ENCODE measurements at regions of chr5 and their contacts with region 1.

Region 1: GRCh38 chr5:134904630-134905245 is at the start of gene PCBD2:
- DNase-seq: peak; percentile 90 to 95
- ATAC-seq: peak; percentile 86 to 97 (median 86)
- H3K4me3 ChIP-seq: peak within 1 kb of the TSS; percentile 71
- H3K4me3 Mint-ChIP-seq: peak within 1 kb of the TSS; percentile 96
- H3K27ac ChIP-seq: peak within 1 kb of the TSS; percentile 92
- H3K27ac Mint-ChIP-seq: peak within 1 kb of the TSS; percentile 91 to 94
- H3K4me1 ChIP-seq: peaks cover 11% of the 10 kb centered on the region
- H3K4me1 Mint-ChIP-seq: peaks cover 4% of the 10 kb centered on the region in 2 donors
- H3K27me3 ChIP-seq: no peaks in the 10 kb centered on the region
- H3K27me3 Mint-ChIP-seq: no peaks in the 10 kb centered on the region
- CTCF ChIP-seq: peak; percentile 91
- total RNA-seq, gene PCBD2: 7.6 to 11.5 (median 7.7) TPM

Region 2: DNA sequence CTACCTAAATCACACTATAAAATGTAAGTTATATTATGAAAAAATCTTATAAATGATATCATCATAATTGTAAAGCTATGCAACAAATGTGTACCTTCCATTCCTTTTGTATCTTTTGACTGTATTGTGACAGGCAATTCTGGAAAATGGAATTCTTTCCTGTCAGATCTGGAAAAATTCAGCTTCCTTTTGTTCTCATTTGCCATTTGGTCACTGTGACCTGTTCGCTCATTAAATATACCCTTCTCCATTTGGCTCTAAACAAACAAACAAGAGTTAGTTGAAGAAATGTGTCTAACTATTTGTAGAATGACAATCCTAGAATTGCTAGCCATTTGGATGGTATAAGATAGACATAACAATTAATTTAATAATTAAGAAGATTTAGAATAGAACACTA is 600.4 kb before region 1 on chr5:
- intact Hi-C with region 1: loop called (anchors 10 kb)
- DNase-seq: no peak
- ATAC-seq: no peak
- H3K4me3 ChIP-seq: no peak overlapping the region
- H3K4me3 Mint-ChIP-seq: no peak overlapping the region
- H3K27ac ChIP-seq: no peak overlapping the region
- H3K27ac Mint-ChIP-seq: no peak overlapping the region
- H3K4me1 ChIP-seq: no peaks in the 10 kb centered on the region
- H3K4me1 Mint-ChIP-seq: no peaks in the 10 kb centered on the region
- H3K27me3 ChIP-seq: no peaks in the 10 kb centered on the region
- H3K27me3 Mint-ChIP-seq: peaks cover 0 to 2% of the 10 kb centered on the region in 2 donors
- CTCF ChIP-seq: no peak

Region 3: GRCh38 chr5:134637161-134637582 is 267.6 kb before region 1 on chr5:
- intact Hi-C with region 1: loop called (anchors 10 kb)
- DNase-seq: no peak
- ATAC-seq: no peak
- H3K4me3 ChIP-seq: no peak overlapping the region
- H3K4me3 Mint-ChIP-seq: no peak overlapping the region
- H3K27ac ChIP-seq: no peak overlapping the region
- H3K27ac Mint-ChIP-seq: no peak overlapping the region
- H3K4me1 ChIP-seq: peaks cover 10% of the 10 kb centered on the region
- H3K4me1 Mint-ChIP-seq: no peaks in the 10 kb centered on the region
- H3K27me3 ChIP-seq: no peaks in the 10 kb centered on the region
- H3K27me3 Mint-ChIP-seq: no peaks in the 10 kb centered on the region
- CTCF ChIP-seq: no peak

Region 4: DNA sequence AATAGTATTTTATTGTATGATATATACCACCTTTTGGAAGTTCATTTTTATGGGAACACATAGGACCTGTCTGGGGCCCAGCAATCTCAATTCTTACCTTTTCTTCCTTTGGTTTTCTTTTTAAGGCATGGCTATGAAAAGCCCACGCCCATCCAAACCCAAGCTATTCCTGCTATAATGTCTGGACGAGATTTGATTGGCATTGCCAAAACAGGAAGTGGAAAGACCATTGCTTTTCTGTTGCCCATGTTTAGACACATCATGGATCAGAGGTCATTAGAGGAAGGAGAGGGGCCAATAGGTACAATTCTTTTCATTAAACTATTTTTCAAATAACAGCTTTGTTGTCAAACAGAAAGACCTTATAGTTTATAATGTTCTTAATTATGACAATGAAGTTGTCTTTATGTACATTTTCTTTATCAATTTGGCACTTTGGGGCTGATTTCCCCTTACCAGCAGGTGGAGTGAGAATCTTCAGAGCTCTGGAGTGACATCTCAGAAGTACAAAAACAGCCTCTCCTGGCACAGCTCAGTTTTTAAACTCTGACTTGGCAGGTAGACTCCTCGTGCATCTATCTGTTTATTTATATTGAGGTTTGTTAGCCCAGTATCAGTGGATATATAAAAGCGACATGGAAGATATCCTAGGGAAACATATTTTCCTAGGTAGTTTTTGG is 120.4 kb before region 1 on chr5:
- intact Hi-C with region 1: loop called (anchors 1 kb)
- DNase-seq: peak in 1 of 2 donors; percentile 50
- ATAC-seq: no peak
- H3K4me3 ChIP-seq: no peak overlapping the region
- H3K4me3 Mint-ChIP-seq: no peak overlapping the region
- H3K27ac ChIP-seq: no peak overlapping the region
- H3K27ac Mint-ChIP-seq: peak overlapping the region in 1 of 2 donors; percentile 48
- H3K4me1 ChIP-seq: no peaks in the 10 kb centered on the region
- H3K4me1 Mint-ChIP-seq: no peaks in the 10 kb centered on the region
- H3K27me3 ChIP-seq: no peaks in the 10 kb centered on the region
- H3K27me3 Mint-ChIP-seq: no peaks in the 10 kb centered on the region
- CTCF ChIP-seq: no peak

Region 5: DNA sequence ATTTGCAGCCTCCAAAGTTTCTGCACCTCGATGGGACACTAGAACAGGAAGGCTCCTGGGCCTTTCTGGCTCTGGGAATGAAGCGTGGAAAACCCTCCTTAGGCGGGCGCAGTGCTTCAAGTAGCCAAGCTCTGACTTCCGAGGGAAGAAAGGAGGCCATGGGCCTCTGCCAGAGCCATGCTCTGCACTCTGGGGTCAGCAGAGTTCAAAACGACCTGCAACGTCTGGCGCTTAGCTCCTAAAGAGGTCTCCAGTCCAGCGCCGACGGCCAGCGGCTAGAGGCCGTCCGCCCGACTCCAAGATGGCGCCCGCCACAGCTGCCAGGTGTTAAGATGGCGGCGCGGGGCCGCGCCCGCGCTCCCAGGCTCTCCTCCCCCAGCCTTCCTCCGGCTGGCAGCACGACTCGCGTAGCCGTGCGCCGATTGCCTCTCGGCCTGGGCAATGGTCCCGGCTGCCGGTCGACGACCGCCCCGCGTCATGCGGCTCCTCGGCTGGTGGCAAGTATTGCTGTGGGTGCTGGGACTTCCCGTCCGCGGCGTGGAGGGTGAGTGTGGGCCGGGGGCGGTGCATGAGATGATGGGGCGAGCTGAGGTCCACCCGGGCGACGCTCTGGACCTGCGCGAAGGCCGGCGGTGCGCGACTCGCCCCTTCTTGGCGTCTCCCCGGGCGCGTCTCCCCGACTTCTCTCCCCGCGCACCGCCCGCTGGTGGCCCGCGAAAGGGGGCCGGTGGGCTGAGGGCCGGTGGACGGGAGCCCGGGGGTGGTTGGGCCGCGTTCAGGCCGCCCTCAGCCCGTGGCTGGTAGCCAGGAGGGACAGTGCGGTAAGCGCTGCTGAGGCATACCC is 30.5 kb before region 1 on chr5 and contains the start of gene TXNDC15:
- intact Hi-C with region 1: loop called (anchors 1 kb)
- DNase-seq: peak; percentile 84 to 91
- ATAC-seq: peak; percentile 90 to 98 (median 93)
- H3K4me3 ChIP-seq: peak within 1 kb of the TSS; percentile 66
- H3K4me3 Mint-ChIP-seq: peak within 1 kb of the TSS; percentile 93
- H3K27ac ChIP-seq: peak within 1 kb of the TSS; percentile 99
- H3K27ac Mint-ChIP-seq: peak within 1 kb of the TSS; percentile 91 to 98
- H3K4me1 ChIP-seq: peaks cover 33% of the 10 kb centered on the region
- H3K4me1 Mint-ChIP-seq: peaks cover 23 to 38% of the 10 kb centered on the region in 2 donors
- H3K27me3 ChIP-seq: no peaks in the 10 kb centered on the region
- H3K27me3 Mint-ChIP-seq: no peaks in the 10 kb centered on the region
- CTCF ChIP-seq: no peak
- total RNA-seq, gene TXNDC15: 36.6 to 48.3 (median 47.8) TPM

Region 6: DNA sequence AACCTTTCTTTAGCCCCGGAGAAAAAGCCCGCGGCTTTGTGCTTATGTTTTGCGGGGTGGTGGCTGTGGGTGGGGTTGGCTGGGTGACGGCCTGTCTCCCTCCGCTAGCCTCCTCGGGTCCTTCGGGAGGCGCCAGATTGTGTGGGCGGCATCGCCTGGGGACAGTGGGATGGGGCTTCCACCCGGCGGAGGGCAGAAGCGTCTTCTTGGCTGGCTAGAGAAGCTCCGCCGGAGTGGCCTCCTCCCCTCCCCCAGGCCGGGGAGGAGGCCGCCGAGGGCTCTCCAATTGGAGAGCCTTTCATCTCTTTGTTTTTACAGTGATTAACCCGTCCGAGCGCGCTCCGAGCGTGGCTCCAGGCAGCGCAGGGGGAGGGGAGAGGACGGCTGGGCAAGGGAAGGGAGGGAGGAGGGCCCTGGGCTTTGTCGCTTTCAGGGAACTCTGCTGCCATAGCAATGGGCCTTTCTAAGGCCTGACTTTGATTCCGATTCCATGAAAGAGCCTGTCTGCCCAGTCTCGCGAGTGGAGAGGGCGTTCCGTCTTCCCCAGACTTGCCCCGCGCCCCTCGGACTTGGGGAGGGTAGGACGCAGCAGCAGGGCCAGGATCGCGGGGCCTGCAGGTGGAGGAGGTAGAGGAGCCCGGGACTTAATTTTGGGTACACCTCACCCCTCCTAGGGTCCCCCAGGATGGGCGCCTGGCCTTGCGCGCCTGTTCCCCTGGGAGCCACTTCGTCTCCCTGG is 584.2 kb after region 1 on chr5:
- intact Hi-C with region 1: no loop called
- DNase-seq: no peak
- ATAC-seq: no peak
- H3K4me3 ChIP-seq: no peak overlapping the region
- H3K4me3 Mint-ChIP-seq: no peak overlapping the region
- H3K27ac ChIP-seq: no peak overlapping the region
- H3K27ac Mint-ChIP-seq: no peak overlapping the region
- H3K4me1 ChIP-seq: no peaks in the 10 kb centered on the region
- H3K4me1 Mint-ChIP-seq: peaks cover 0 to 5% of the 10 kb centered on the region in 2 donors
- H3K27me3 ChIP-seq: peaks cover 27% of the 10 kb centered on the region
- H3K27me3 Mint-ChIP-seq: peaks cover 52 to 59% of the 10 kb centered on the region in 2 donors
- CTCF ChIP-seq: no peak

Measured in natural killer cell (primary cell).